Left cardiac atrium (tissue), 4 donors: ENCODE measurements at regions of chr1 and their contacts with region 1.

Region 1: DNA sequence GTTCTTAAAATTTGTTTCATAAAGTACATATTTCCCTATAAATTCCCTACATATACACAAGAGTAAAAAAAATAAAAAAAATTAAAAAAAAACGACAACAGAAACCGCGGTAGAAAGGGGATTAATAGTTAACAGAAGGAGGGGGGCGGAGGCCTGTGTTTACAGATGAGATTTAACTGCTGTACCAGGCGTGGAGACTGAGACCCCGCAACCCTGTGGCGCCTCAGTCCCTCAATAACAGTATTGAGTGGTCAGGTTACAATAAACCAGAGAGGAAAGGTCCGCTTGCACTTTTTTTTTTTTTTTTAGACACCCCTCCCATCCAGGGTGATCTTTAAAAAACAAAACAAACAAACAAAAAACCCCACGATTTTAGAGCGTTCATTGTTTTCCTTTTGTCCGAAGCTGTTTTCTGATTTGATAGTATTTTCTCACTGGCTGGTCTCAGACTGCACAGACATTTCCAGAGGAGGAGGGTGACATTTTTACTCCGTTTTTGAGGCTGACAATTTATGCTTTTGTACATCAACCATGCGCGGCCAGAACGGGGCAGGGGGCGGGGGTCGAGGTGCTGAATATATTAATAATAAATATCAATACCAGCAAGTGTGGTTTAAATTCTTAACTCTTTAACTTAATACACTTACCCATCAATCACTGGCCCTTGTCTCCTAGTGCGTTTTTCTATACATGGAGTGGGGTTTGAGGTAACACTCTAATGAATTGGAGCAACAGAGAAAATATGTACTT is 1223.9 kb downstream of the BRINP3 start:
- DNase-seq: no peak
- ATAC-seq: no peak

Region 2: DNA sequence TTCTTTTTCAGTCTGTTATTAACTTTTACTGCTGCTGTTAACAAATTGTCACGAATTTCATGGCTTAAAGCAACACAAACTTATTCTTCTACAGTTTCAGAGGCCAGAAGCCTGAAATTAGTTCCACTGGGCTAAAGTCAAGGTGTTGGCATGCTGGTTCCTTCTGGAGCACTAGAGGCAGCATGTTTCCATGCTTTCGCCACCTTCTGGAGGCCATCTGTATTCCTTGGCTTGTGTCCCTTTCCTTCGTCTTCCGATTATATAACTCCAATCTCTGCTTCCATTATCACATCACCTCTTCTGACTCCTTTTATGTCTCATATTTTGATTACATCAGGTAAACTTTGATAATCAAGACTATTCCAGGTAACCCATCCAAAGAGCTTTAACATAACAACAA is 518.2 kb before region 1 on chr1:
- intact Hi-C with region 1: no loop called
- DNase-seq: no peak
- ATAC-seq: no peak

Region 3: DNA sequence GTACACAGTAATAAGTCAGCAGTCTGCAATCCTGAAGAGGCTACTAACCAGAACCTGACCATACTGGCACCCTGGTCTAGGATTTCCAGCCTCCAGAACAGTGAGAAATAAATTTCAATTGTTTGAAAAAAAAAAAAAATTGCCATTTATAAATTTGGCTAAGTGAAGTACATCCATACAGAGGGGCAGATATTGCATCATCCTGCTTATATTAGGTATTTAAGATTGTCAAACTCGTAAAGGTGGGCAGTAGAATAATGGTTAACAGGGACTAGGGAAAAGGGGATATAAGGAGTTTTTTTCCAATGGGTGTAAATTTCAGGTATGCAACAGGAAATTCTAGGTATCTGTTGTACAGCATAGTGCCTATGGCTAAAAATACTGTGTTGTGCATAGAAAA is 27.0 kb before region 1 on chr1:
- intact Hi-C with region 1: loop called in 1 of 2 experiments (anchors 2 kb)
- DNase-seq: no peak
- ATAC-seq: no peak

Region 4: GRCh38 chr1:189374816-189375215 is 121.0 kb after region 1 on chr1:
- intact Hi-C with region 1: no loop called
- DNase-seq: no peak
- ATAC-seq: no peak